H1 (cell line): ENCODE measurements at regions of chr13 and their contacts with region 1.

Region 1: GRCh38 chr13:36736119-36736726 is 62.4 kb downstream of the SERTM1 start:
- DNase-seq: no peak
- H3K4me3 ChIP-seq: no peak overlapping the region
- H3K27ac ChIP-seq: no peak overlapping the region
- H3K4me1 ChIP-seq: no peaks in the 10 kb centered on the region
- H3K27me3 ChIP-seq: no peaks in the 10 kb centered on the region
- CTCF ChIP-seq: peak in 2 of 3 experiments; percentile 35 to 58; a peak in 2 of 4 replicates
- EP300 ChIP-seq: no peak
- POLR2A ChIP-seq: no peak
- RAD21 ChIP-seq: peak; percentile 62 to 63

Region 2: DNA sequence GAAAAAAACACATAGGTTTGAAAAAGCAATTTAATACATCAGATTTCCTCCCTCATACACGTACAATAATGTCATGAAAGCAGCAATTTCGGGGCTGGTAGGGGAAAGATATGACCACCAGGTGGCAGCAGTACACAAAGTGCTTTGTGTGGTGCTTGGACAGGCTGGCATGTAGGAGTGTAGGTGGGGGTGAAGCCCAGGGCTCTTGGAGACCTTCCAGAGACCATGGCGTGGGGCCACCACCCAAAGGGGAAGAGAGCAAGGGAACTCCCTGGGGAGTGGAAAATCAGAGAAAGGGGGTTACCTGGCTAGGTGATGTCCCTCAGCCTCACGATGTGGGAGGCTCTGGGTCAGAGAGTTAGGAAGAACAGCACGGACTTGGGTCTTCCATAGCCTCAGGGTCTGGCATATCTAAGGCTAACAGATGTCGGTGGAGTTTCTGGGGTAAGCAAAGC is 315.8 kb before region 1 on chr13:
- CTCF ChIA-PET with region 1: interaction called, 12 read pairs
- POLR2A ChIA-PET with region 1: interaction called, 3 read pairs
- DNase-seq: peak in 1 of 2 experiments; percentile 87
- H3K4me3 ChIP-seq: no peak overlapping the region
- H3K27ac ChIP-seq: no peak overlapping the region
- H3K4me1 ChIP-seq: no peaks in the 10 kb centered on the region
- H3K27me3 ChIP-seq: no peaks in the 10 kb centered on the region
- CTCF ChIP-seq: peak; percentile 74 to 89 (median 79)
- EP300 ChIP-seq: no peak
- POLR2A ChIP-seq: no peak
- RAD21 ChIP-seq: peak; percentile 87 to 92

Region 3: DNA sequence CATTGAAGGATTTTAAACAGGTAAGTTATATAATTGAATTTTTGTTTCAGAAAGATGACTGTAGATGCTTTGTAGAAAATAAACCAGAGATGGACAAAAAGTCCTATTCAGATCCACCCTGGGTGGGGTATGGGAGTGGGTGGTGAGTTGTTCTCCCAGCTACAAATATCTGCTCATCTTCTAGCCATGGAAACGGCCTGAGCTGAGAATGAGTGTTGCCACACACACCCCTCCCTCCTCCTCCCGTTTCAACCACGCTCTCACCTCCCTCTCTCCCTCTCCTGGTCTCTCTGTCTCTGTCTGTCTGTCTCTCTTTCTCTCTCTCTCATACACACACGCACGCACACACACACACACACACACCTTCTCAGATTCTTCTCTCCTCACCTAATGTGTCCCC is 36.1 kb before region 1 on chr13:
- CTCF ChIA-PET with region 1: interaction called, 13 read pairs
- POLR2A ChIA-PET with region 1: no interaction called
- DNase-seq: no peak
- H3K4me3 ChIP-seq: no peak overlapping the region
- H3K27ac ChIP-seq: no peak overlapping the region
- H3K4me1 ChIP-seq: no peaks in the 10 kb centered on the region
- H3K27me3 ChIP-seq: no peaks in the 10 kb centered on the region
- CTCF ChIP-seq: no peak
- EP300 ChIP-seq: no peak
- POLR2A ChIP-seq: no peak
- RAD21 ChIP-seq: no peak

Region 4: GRCh38 chr13:36724141-36724540 is 12.1 kb before region 1 on chr13:
- CTCF ChIA-PET with region 1: interaction called, 47 read pairs
- POLR2A ChIA-PET with region 1: no interaction called
- DNase-seq: no peak
- H3K4me3 ChIP-seq: no peak overlapping the region
- H3K27ac ChIP-seq: no peak overlapping the region
- H3K4me1 ChIP-seq: no peaks in the 10 kb centered on the region
- H3K27me3 ChIP-seq: no peaks in the 10 kb centered on the region
- CTCF ChIP-seq: peak; percentile 22 to 32 (median 26)
- EP300 ChIP-seq: no peak
- POLR2A ChIP-seq: no peak
- RAD21 ChIP-seq: peak; percentile 46 to 64

Region 5: GRCh38 chr13:36841391-36841790 is 105.2 kb after region 1 on chr13:
- CTCF ChIA-PET with region 1: interaction called, 15 read pairs
- POLR2A ChIA-PET with region 1: no interaction called
- DNase-seq: no peak
- H3K4me3 ChIP-seq: no peak overlapping the region
- H3K27ac ChIP-seq: no peak overlapping the region
- H3K4me1 ChIP-seq: peaks cover 0 to 6% (median 1%) of the 10 kb centered on the region in 4 experiments; a peak in 1 of 7 replicates
- H3K27me3 ChIP-seq: no peaks in the 10 kb centered on the region
- CTCF ChIP-seq: no peak
- EP300 ChIP-seq: no peak
- POLR2A ChIP-seq: no peak
- RAD21 ChIP-seq: no peak